ENCODE measurements at regions of chr10 and their contacts with region 1.

Region 1: GRCh38 chr10:1893235-1893634 is 155.9 kb upstream of the ADARB2 start:
- DNase-seq: no peak
- ATAC-seq: no peak
- H3K4me3 ChIP-seq: no peak overlapping the region
- H3K4me3 Mint-ChIP-seq: no peak overlapping the region
- H3K27ac ChIP-seq: no peak overlapping the region
- H3K27ac Mint-ChIP-seq: no peak overlapping the region
- H3K4me1 ChIP-seq: peaks cover 2% of the 10 kb centered on the region
- H3K4me1 Mint-ChIP-seq: peaks cover 7% of the 10 kb centered on the region
- H3K27me3 ChIP-seq: no peaks in the 10 kb centered on the region
- H3K27me3 Mint-ChIP-seq: no peaks in the 10 kb centered on the region
- CTCF ChIP-seq: no peak

Region 2: GRCh38 chr10:1847361-1847760 is 45.9 kb before region 1 on chr10:
- CTCF ChIA-PET with region 1: no interaction called
- POLR2A ChIA-PET with region 1: no interaction called
- intact Hi-C with region 1: no loop called
- DNase-seq: no peak
- ATAC-seq: no peak
- H3K4me3 ChIP-seq: no peak overlapping the region
- H3K4me3 Mint-ChIP-seq: no peak overlapping the region
- H3K27ac ChIP-seq: no peak overlapping the region
- H3K27ac Mint-ChIP-seq: no peak overlapping the region
- H3K4me1 ChIP-seq: no peaks in the 10 kb centered on the region
- H3K4me1 Mint-ChIP-seq: no peaks in the 10 kb centered on the region
- H3K27me3 ChIP-seq: peaks cover 0 to 2% of the 10 kb centered on the region in 2 experiments
- H3K27me3 Mint-ChIP-seq: no peaks in the 10 kb centered on the region
- CTCF ChIP-seq: no peak

Region 3: DNA sequence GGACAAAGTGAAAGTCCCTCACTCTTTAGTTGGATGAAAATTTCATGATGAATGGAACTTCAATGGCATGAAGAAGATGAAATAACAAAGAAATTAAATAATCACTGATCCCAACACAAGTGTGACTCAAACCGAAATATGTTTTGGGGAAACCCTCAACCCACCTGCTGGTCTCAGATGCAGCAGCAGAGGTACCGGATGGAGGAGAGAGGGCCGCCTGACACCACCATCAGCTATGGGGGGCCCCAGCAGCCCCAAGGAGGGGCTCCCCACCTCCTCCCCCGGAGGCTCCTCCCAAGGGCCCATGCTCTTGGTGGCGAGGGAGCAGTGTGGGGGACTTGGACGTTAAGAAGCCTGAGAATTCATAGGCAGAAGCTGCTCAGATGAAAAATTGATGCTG is 18.7 kb before region 1 on chr10:
- CTCF ChIA-PET with region 1: no interaction called
- POLR2A ChIA-PET with region 1: no interaction called
- intact Hi-C with region 1: no loop called
- DNase-seq: no peak
- ATAC-seq: no peak
- H3K4me3 ChIP-seq: no peak overlapping the region
- H3K4me3 Mint-ChIP-seq: no peak overlapping the region
- H3K27ac ChIP-seq: no peak overlapping the region
- H3K27ac Mint-ChIP-seq: no peak overlapping the region
- H3K4me1 ChIP-seq: no peaks in the 10 kb centered on the region
- H3K4me1 Mint-ChIP-seq: no peaks in the 10 kb centered on the region
- H3K27me3 ChIP-seq: no peaks in the 10 kb centered on the region
- H3K27me3 Mint-ChIP-seq: no peaks in the 10 kb centered on the region
- CTCF ChIP-seq: no peak

Region 4: GRCh38 chr10:1939016-1939415 is 45.8 kb after region 1 on chr10:
- CTCF ChIA-PET with region 1: no interaction called
- POLR2A ChIA-PET with region 1: interaction called, 4 read pairs
- intact Hi-C with region 1: loop called in 1 of 2 experiments (anchors 1 kb)
- DNase-seq: peak; percentile 21 to 83 (median 62)
- ATAC-seq: peak; percentile 81
- H3K4me3 ChIP-seq: peak overlapping the region; percentile 3
- H3K4me3 Mint-ChIP-seq: peak overlapping the region; percentile 66
- H3K27ac ChIP-seq: peak overlapping the region; percentile 42 to 76
- H3K27ac Mint-ChIP-seq: peak overlapping the region; percentile 93
- H3K4me1 ChIP-seq: peaks cover 24% of the 10 kb centered on the region
- H3K4me1 Mint-ChIP-seq: peaks cover 46% of the 10 kb centered on the region
- H3K27me3 ChIP-seq: no peaks in the 10 kb centered on the region
- H3K27me3 Mint-ChIP-seq: no peaks in the 10 kb centered on the region
- CTCF ChIP-seq: no peak